Dendritic cell treated with granulocyte-macrophage colony-stimulating factor and Interleukin-4, amounts not matched to agents 40 ng/mL and 50 ng/mL, for 4 days (primary cell): ENCODE measurements at regions of chr17 and their contacts with region 1.

Region 1: DNA sequence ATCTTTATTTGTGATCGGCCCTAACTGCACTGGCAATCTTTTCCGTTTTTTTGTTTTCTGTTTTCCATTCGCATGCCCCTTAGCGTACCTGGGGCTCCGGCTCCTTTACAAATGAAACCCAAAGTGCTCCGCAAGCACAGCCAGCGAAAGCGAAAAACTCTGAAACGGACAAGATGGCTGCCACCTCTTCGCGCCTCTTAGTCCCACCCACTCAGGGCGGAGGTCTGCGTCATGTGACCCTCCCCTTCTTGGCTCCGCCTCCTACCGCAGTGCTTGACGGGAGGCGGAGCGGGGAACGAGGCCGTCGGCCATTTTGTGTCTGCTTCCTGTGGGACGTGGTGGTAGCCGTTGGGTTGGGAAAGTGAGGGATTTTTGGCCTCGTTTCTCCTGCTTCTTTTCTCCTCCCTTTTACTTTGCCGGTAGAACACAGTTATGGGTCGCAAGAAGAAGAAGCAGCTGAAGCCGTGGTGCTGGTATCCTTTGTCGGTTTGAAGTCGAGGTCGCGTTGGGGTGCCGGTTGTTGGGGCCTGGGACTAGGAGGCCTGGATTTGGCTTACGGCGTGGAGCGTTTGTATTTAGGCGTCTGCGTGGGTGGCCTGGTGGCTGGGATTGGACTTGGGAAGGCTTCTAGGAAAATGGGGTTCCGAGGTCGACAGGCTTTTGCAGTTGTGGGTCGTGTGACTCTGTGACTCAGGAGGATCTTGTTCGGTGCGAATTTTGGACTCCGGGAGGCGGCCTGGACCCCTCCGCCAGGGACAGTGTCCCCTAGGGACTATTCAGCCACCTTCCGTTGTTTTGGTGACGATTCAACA is at the start of gene ZNF207:
- H3K4me3 Mint-ChIP-seq: peak within 1 kb of the TSS; percentile 91
- H3K27ac Mint-ChIP-seq: peak within 1 kb of the TSS; percentile 94
- H3K4me1 Mint-ChIP-seq: peaks cover 37% of the 10 kb centered on the region
- H3K27me3 Mint-ChIP-seq: no peaks in the 10 kb centered on the region

Region 2: GRCh38 chr17:31997005-31997404 is 353.1 kb before region 1 on chr17:
- intact Hi-C with region 1: loop called (anchors 10 kb)
- H3K4me3 Mint-ChIP-seq: no peak overlapping the region
- H3K27ac Mint-ChIP-seq: no peak overlapping the region
- H3K4me1 Mint-ChIP-seq: no peaks in the 10 kb centered on the region
- H3K27me3 Mint-ChIP-seq: no peaks in the 10 kb centered on the region

Region 3: DNA sequence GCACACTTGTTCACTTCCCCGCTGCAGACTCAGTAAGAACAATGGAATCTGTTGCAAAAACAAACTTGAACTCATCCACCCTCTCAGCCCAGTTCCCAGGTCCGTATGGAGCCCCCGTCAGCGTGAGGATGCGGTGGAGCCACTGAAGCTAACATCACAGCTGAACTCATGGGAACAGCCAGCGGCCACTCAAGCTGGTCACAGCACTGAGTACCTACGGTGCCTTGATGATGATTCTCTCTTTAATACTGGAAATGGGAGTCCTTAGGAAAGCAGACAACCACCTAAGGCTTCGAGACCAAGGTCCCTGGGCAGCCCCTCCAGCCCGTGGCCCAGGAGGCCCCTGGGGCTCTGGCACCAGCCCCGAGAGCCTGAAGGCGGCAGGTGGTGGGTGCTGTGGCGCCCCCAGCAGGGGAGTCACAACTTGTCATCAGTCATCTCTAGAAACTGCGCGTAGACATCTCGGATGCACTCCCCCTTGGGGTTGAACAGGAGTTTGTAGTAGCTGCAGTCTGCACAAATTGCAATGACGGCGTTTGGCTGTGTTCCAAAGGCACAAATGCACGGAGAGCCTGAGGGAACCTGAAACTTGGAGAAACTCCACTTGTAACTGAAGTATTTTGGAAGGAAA is 238.8 kb before region 1 on chr17:
- intact Hi-C with region 1: no loop called
- H3K4me3 Mint-ChIP-seq: no peak overlapping the region
- H3K27ac Mint-ChIP-seq: no peak overlapping the region
- H3K4me1 Mint-ChIP-seq: peaks cover 25% of the 10 kb centered on the region
- H3K27me3 Mint-ChIP-seq: no peaks in the 10 kb centered on the region

Region 4: DNA sequence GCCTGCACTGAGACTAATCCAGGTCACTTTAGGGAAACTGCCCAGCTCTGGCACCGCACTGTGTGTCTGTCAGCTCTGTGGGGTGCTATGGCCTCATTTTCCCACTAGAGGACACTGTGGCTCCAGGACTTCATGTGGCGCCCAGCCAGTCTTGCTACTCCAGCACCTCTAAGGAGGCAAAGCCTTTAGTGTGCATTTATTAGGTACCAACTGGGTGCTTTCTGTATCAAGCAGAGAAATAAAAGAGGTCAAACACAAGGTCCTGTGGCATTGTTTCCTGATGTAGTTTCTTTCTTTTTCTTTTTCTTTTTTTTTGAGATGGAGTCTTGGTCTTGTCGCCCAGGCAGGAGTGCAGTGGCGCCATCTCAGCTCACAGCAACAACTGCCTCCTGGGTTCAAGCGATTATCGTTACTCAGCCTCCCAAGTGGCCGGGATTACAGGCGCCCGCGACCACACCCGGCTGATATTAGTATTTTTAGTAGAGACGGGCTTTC is 96.9 kb before region 1 on chr17:
- intact Hi-C with region 1: loop called (anchors 5 kb)
- H3K4me3 Mint-ChIP-seq: no peak overlapping the region
- H3K27ac Mint-ChIP-seq: no peak overlapping the region
- H3K4me1 Mint-ChIP-seq: peaks cover 6% of the 10 kb centered on the region
- H3K27me3 Mint-ChIP-seq: peaks cover 35% of the 10 kb centered on the region